ENCODE measurements at regions of chr13 and their contacts with region 1.

Region 1: GRCh38 chr13:29081036-29081435 is 260.9 kb downstream of the MTUS2 start:
- DNase-seq: peak; percentile 81
- ATAC-seq: peak; percentile 88
- H3K4me3 ChIP-seq: no peak overlapping the region
- H3K4me3 Mint-ChIP-seq: peak overlapping the region; percentile 10
- H3K27ac ChIP-seq: peak overlapping the region; percentile 20 to 22
- H3K27ac Mint-ChIP-seq: peak overlapping the region; percentile 44
- H3K4me1 ChIP-seq: peaks cover 17 to 19% of the 10 kb centered on the region in 2 donors
- H3K4me1 Mint-ChIP-seq: peaks cover 22% of the 10 kb centered on the region
- H3K27me3 ChIP-seq: peaks cover 0 to 3% (median 0%) of the 10 kb centered on the region in 4 experiments
- H3K27me3 Mint-ChIP-seq: peaks cover 9% of the 10 kb centered on the region
- CTCF ChIP-seq: no peak

Region 2: GRCh38 chr13:29362849-29363604 is 282.0 kb after region 1 on chr13:
- CTCF ChIA-PET with region 1: interaction called, 11 read pairs
- POLR2A ChIA-PET with region 1: no interaction called
- intact Hi-C with region 1: no loop called
- DNase-seq: peak; percentile 66
- ATAC-seq: peak; percentile 62
- H3K4me3 ChIP-seq: no peak overlapping the region
- H3K4me3 Mint-ChIP-seq: no peak overlapping the region
- H3K27ac ChIP-seq: no peak overlapping the region
- H3K27ac Mint-ChIP-seq: no peak overlapping the region
- H3K4me1 ChIP-seq: peaks cover 0 to 4% of the 10 kb centered on the region in 2 donors
- H3K4me1 Mint-ChIP-seq: peaks cover 2% of the 10 kb centered on the region
- H3K27me3 ChIP-seq: no peaks in the 10 kb centered on the region
- H3K27me3 Mint-ChIP-seq: peaks cover 18% of the 10 kb centered on the region
- CTCF ChIP-seq: peak; percentile 97

Region 3: DNA sequence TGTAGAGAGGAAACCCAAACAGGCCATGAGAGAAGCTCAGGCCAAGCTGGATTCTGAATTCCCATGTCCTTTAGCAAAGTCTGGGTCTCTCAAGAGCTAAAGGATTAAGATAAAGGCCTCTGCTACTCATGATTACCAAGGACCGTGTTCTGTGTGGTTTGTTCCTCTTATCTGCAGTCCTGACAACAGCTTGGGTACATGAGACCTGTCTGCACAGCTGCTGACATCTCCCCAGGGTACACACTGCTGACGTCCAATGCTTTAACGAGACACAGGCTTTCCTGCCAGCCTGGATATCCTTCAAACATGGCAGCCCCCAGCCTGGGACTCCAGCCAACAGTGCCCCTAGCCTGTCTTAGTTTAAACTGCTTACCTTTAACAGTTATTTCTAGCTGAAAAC is 303.4 kb after region 1 on chr13:
- CTCF ChIA-PET with region 1: no interaction called
- POLR2A ChIA-PET with region 1: no interaction called
- intact Hi-C with region 1: no loop called
- DNase-seq: no peak
- ATAC-seq: no peak
- H3K4me3 ChIP-seq: no peak overlapping the region
- H3K4me3 Mint-ChIP-seq: no peak overlapping the region
- H3K27ac ChIP-seq: no peak overlapping the region
- H3K27ac Mint-ChIP-seq: no peak overlapping the region
- H3K4me1 ChIP-seq: no peaks in the 10 kb centered on the region
- H3K4me1 Mint-ChIP-seq: no peaks in the 10 kb centered on the region
- H3K27me3 ChIP-seq: peaks cover 0 to under 1% (median 0%) of the 10 kb centered on the region in 4 experiments
- H3K27me3 Mint-ChIP-seq: peaks cover 12% of the 10 kb centered on the region
- CTCF ChIP-seq: no peak

Measured in B cell (primary cell).